CD4-positive, alpha-beta T cell (primary cell): ENCODE measurements at regions of chr18 and their contacts with region 1.

Region 1: GRCh38 chr18:45690975-45691815 is 32.8 kb upstream of the SLC14A1 start:
- DNase-seq: peak; percentile 57 to 89 (median 74)
- ATAC-seq: no peak
- H3K4me3 ChIP-seq: no peak overlapping the region
- H3K4me3 Mint-ChIP-seq: peak overlapping the region; percentile 57
- H3K27ac ChIP-seq: no peak overlapping the region
- H3K27ac Mint-ChIP-seq: no peak overlapping the region
- H3K4me1 ChIP-seq: peaks cover 45% of the 10 kb centered on the region
- H3K4me1 Mint-ChIP-seq: peaks cover 45% of the 10 kb centered on the region
- H3K27me3 ChIP-seq: no peaks in the 10 kb centered on the region
- H3K27me3 Mint-ChIP-seq: peaks cover 10% of the 10 kb centered on the region
- CTCF ChIP-seq: peak; percentile 86

Region 2: DNA sequence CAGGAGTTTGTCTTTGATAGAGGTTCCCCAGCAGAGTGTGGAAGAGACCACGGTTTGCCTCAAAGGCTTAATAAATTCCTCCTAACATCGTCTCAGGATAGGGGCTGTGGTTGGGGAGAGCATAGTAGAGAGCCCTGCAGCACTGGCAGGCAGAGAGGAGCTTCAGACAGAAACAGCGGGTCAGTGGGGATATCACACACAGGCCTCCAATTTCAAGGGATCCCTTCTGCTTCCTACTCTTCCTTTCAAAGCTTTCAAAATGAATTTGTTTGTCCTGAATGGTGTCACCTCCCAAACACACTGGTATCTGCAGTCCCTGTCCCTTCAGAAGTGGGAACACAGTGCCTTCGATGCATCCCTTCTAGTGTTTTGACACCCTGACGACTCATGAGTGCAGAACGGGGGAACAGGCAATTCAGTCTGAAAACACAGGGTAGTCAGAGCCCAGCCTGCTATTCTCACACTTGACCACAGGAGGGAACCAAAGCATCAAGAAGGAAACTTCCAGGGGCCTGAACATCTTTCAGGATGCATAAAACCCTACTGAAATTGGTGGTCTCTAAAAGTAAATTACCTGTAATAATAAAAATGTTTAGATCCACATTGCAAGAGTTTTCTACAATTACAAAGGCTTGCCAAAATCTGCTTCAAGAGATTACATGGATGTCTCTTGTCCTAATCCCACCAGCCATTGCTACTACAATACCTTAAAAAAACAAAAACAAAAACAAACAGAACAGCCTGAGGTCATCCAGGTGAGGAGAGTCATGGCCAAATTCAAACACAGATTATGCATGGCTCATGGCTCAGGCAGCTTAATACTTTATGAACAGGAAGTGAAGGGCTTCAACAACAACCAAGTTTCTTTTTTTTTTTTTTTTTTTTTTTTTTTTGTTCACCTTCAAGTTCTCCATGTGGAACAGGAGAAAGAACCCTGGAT is 26.1 kb before region 1 on chr18:
- CTCF ChIA-PET with region 1: interaction called, 9 read pairs
- POLR2A ChIA-PET with region 1: interaction called, 73 read pairs
- intact Hi-C with region 1: loop called (anchors 1 to 2 kb)
- DNase-seq: peak; percentile 47 to 85 (median 59)
- ATAC-seq: peak; percentile 75
- H3K4me3 ChIP-seq: no peak overlapping the region
- H3K4me3 Mint-ChIP-seq: peak overlapping the region; percentile 59
- H3K27ac ChIP-seq: no peak overlapping the region
- H3K27ac Mint-ChIP-seq: peak overlapping the region; percentile 69
- H3K4me1 ChIP-seq: peaks cover 53% of the 10 kb centered on the region
- H3K4me1 Mint-ChIP-seq: peaks cover 61% of the 10 kb centered on the region
- H3K27me3 ChIP-seq: no peaks in the 10 kb centered on the region
- H3K27me3 Mint-ChIP-seq: no peaks in the 10 kb centered on the region
- CTCF ChIP-seq: peak; percentile 93

Region 3: GRCh38 chr18:45775241-45775676 is 84.1 kb after region 1 on chr18:
- CTCF ChIA-PET with region 1: no interaction called
- POLR2A ChIA-PET with region 1: interaction called, 12 read pairs
- intact Hi-C with region 1: no loop called
- DNase-seq: peak; percentile 28 to 76 (median 46)
- ATAC-seq: peak; percentile 83
- H3K4me3 ChIP-seq: peak overlapping the region; percentile 74
- H3K4me3 Mint-ChIP-seq: peak overlapping the region; percentile 80
- H3K27ac ChIP-seq: no peak overlapping the region
- H3K27ac Mint-ChIP-seq: peak overlapping the region; percentile 28
- H3K4me1 ChIP-seq: peaks cover 27% of the 10 kb centered on the region
- H3K4me1 Mint-ChIP-seq: peaks cover 23% of the 10 kb centered on the region
- H3K27me3 ChIP-seq: no peaks in the 10 kb centered on the region
- H3K27me3 Mint-ChIP-seq: peaks cover 36% of the 10 kb centered on the region
- CTCF ChIP-seq: no peak

Region 4: DNA sequence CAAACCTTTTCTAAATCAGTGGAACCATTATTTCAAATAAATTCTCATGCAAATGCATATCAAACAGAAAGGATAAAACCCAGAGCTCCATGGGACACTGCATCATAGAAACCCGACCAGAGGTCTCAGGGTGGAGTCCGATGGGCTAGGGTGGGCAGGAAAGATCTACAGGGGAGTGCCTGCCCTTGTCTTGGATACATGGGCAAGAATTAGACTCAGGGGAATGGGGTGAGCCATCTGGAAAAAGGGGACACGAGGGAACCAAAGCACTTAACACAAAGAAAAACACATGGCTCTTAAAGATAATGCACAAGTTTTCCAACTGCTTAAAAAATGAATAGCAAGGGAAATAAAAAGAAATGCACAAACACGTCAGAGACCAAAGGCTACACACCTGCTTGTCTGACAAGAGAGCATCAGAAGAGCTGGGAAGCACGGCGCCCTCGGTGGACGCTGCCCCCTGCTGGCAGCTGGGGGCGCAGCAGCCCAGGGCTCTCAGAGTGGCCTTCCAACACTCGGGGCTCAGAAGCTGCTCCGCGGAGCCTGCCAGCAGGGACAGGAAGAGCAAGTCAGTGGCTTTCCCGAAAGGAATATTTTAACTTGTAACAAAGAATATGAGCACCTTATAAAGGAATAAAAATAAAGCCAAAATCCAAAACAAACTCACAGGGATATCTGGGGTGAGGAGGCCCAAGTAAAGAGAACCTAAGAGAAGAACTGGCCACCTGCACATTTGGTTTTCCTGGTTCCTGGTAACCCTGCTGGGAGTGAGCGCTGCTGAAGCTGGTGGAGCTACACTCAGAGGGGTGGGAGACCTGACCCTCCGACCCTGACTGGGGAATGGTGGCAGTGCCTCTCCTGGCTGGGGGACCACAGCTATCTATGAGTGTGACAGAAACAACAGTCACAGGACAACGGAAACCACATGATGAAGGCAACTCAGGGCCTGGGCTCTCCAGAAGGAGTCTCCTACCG is 188.8 kb after region 1 on chr18:
- CTCF ChIA-PET with region 1: interaction called, 5 read pairs
- POLR2A ChIA-PET with region 1: interaction called, 4 read pairs
- intact Hi-C with region 1: loop called (anchors 1 kb)
- DNase-seq: peak; percentile 39 to 84 (median 69)
- ATAC-seq: peak; percentile 96
- H3K4me3 ChIP-seq: no peak overlapping the region
- H3K4me3 Mint-ChIP-seq: no peak overlapping the region
- H3K27ac ChIP-seq: no peak overlapping the region
- H3K27ac Mint-ChIP-seq: peak overlapping the region; percentile 2
- H3K4me1 ChIP-seq: peaks cover 10% of the 10 kb centered on the region
- H3K4me1 Mint-ChIP-seq: peaks cover 19% of the 10 kb centered on the region
- H3K27me3 ChIP-seq: no peaks in the 10 kb centered on the region
- H3K27me3 Mint-ChIP-seq: no peaks in the 10 kb centered on the region
- CTCF ChIP-seq: peak; percentile 99

Region 5: GRCh38 chr18:46243095-46243494 is 551.9 kb after region 1 on chr18:
- CTCF ChIA-PET with region 1: no interaction called
- POLR2A ChIA-PET with region 1: no interaction called
- intact Hi-C with region 1: loop called in 1 of 2 experiments (anchors 10 kb)
- DNase-seq: no peak
- ATAC-seq: no peak
- H3K4me3 ChIP-seq: no peak overlapping the region
- H3K4me3 Mint-ChIP-seq: no peak overlapping the region
- H3K27ac ChIP-seq: no peak overlapping the region
- H3K27ac Mint-ChIP-seq: no peak overlapping the region
- H3K4me1 ChIP-seq: peaks cover 12% of the 10 kb centered on the region
- H3K4me1 Mint-ChIP-seq: peaks cover 51% of the 10 kb centered on the region
- H3K27me3 ChIP-seq: no peaks in the 10 kb centered on the region
- H3K27me3 Mint-ChIP-seq: no peaks in the 10 kb centered on the region
- CTCF ChIP-seq: no peak